Calu3 (cell line): ENCODE measurements at regions of chr11 and their contacts with region 1.

Region 1: GRCh38 chr11:87421422-87421821 is 383.7 kb downstream of the TMEM135 start:
- DNase-seq: peak; percentile 53
- H3K4me3 Mint-ChIP-seq: no peak overlapping the region
- H3K27ac Mint-ChIP-seq: no peak overlapping the region
- H3K4me1 Mint-ChIP-seq: no peaks in the 10 kb centered on the region
- H3K27me3 Mint-ChIP-seq: peaks cover 23% of the 10 kb centered on the region
- CTCF ChIP-seq: peak; percentile 52

Region 2: DNA sequence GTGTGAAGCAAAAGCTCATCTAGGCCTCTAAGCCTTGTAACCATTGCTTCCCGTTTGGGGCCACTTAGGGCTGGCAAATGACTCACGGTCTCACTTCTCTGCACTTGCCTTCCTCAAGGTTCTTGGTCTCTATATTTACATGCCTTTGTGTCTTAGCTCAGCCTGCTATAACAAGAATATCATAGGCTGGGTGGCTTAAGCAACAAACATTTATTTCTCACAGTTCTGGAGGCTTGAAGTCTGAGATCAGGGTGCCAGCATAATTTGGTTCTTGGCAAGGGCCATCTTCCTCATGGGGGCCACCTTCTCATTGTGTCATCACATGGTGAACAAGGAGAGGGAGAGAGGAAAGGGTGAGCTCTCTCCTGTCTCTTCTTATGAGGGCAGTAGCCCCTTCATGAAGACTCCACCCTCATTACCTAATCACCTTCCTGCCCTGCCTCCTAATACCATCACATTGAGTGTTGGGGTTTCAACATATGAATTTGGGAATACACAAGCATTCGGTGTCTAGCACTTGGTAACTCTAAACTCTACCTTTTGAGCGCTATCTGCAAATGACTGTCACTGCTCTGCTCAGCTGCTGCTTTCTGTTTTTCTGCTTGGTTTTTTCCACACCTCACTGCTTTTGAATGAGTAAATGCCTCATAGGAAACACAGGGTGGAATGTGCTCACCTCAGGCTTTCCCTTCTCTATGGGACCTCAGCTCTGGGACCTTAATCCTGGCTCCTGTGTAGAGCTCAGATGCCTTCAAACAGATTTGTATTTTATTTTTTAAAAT is 732.8 kb before region 1 on chr11:
- CTCF ChIA-PET with region 1: no interaction called
- intact Hi-C with region 1: no loop called
- DNase-seq: no peak
- H3K4me3 Mint-ChIP-seq: no peak overlapping the region
- H3K27ac Mint-ChIP-seq: no peak overlapping the region
- H3K4me1 Mint-ChIP-seq: peaks cover 12% of the 10 kb centered on the region
- H3K27me3 Mint-ChIP-seq: no peaks in the 10 kb centered on the region
- CTCF ChIP-seq: no peak

Region 3: GRCh38 chr11:86938900-86939880 is 482.2 kb before region 1 on chr11:
- CTCF ChIA-PET with region 1: interaction called, 4 read pairs
- intact Hi-C with region 1: loop called (anchors 1 kb)
- DNase-seq: no peak
- H3K4me3 Mint-ChIP-seq: no peak overlapping the region
- H3K27ac Mint-ChIP-seq: no peak overlapping the region
- H3K4me1 Mint-ChIP-seq: peaks cover 20% of the 10 kb centered on the region
- H3K27me3 Mint-ChIP-seq: no peaks in the 10 kb centered on the region
- CTCF ChIP-seq: no peak

Region 4: DNA sequence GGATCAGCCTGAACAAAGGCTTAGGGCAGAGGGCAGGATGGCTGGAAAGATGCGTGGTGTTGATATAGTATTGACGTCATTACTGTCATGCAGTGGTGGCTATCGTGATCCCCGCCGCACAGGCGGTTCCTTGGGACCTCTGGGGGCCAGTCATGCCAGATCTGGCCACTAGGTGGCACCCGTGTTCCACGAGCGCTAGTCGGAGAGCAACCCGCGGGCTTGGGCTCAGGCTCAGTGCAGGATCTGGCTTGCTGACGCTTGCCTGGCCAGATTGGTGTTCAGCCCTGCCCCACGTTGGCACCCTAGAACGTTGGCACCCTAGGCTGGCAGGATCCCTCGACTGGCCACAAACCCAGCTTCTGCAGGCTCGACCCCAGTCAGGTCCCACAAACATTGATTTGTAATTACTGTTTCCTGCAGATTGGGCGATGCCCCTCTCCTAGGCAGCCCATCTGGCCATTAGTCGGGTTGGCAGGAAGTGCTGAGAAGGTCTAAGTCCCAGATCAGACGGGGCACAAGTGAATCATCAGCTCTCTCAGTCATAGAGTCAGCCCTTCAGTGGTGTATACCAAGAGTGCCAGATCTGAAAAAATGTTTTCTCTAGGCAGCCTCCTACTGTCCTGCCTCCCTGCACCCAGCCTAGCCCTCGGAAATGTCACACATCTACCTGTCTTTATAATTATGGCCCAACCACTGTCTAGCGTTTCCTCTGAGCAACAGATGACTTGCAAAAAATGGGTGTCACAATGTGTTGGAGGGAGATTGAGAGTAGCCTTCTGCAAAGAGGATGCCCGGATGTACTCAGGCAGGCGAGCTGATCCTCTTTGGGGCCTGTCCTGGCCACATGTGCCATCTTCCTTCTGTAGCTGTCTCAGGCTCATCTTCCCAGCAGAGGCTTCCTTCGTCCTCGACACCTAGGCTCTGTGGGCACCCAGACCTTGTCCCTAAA is 68.4 kb before region 1 on chr11:
- CTCF ChIA-PET with region 1: no interaction called
- intact Hi-C with region 1: loop called (anchors 1 kb)
- DNase-seq: peak; percentile 85
- H3K4me3 Mint-ChIP-seq: no peak overlapping the region
- H3K27ac Mint-ChIP-seq: no peak overlapping the region
- H3K4me1 Mint-ChIP-seq: no peaks in the 10 kb centered on the region
- H3K27me3 Mint-ChIP-seq: no peaks in the 10 kb centered on the region
- CTCF ChIP-seq: peak; percentile 95